AG04449 (cell line): ENCODE measurements at regions of chr7 and their contacts with region 1.

Region 1: GRCh38 chr7:108497082-108497725 is 28.7 kb downstream of the PNPLA8 start:
- DNase-seq: peak; percentile 1
- H3K4me3 ChIP-seq: no peak overlapping the region
- CTCF ChIP-seq: peak; percentile 68

Region 2: DNA sequence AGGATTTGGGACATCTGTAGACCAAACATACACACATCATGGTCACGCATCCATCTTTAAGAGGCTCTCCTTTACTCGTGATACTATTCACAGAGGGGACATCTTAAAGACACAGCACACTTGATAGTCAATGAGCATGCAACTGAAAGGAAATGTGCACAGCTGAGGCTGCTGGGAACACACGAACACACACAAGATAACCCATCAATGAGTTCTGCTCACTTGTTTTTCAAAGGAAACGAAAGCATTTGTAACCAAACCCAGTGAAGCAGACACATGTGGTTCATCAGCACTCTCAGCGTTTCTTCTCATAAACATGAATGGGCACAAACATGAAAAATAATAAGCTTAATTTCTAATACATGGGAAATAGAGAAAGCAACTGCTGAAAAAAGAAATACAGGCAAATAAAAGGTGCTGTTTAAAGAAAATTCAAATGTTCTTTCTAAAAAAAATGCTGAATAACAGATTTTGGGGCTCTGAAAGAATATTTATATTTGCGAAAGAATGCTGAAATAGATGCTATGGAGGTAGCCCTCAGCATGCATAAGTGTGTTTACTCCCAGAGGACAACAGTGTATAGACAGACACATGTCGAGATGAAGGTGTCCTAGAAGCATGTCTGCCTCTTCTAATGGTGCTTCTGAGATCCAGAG is 307.3 kb before region 1 on chr7:
- CTCF ChIA-PET with region 1: interaction called, 65 read pairs
- POLR2A ChIA-PET with region 1: no interaction called
- DNase-seq: no peak
- H3K4me3 ChIP-seq: no peak overlapping the region
- CTCF ChIP-seq: no peak

Region 3: DNA sequence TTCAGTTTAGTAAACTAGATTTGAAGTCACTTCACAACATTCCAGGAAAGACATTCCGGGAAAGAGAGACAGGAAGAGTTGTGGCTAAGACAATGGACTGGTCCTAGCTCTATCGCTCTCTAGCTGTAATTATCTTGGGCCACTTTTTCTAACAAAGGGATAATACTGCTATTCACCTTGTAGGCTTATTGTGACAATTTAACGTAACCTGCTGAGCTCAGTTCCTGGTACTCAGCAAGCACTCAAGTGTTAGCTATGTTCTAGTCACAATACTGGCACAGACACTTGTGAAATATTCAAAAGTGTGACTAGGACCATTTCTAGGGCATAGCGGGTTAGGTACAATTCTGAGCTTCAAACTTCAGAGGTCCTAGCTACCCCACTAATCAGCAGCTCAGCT is 29.0 kb before region 1 on chr7:
- CTCF ChIA-PET with region 1: interaction called, 11 read pairs
- POLR2A ChIA-PET with region 1: no interaction called
- DNase-seq: no peak
- H3K4me3 ChIP-seq: no peak overlapping the region
- CTCF ChIP-seq: no peak

Region 4: DNA sequence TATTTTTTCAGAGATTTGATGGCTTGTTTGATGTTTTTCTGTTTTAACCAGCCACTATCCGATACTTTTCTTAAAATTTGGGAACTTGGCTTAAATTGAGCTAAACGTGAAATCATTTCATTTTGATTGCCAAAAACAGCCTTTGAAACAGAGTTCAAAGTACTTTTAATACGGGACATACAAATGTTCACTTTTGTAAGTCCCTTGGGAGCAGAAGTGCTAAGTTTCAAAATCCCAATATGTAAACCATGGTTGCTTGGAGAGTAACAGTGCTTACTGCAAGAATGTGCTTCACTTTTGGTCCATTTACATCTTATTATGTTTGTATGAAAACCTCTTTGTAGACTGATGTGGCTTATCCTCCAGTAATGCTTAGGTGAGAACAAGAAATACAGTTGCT is 17.8 kb after region 1 on chr7:
- CTCF ChIA-PET with region 1: interaction called, 24 read pairs
- POLR2A ChIA-PET with region 1: no interaction called
- DNase-seq: no peak
- H3K4me3 ChIP-seq: no peak overlapping the region
- CTCF ChIP-seq: no peak

Region 5: DNA sequence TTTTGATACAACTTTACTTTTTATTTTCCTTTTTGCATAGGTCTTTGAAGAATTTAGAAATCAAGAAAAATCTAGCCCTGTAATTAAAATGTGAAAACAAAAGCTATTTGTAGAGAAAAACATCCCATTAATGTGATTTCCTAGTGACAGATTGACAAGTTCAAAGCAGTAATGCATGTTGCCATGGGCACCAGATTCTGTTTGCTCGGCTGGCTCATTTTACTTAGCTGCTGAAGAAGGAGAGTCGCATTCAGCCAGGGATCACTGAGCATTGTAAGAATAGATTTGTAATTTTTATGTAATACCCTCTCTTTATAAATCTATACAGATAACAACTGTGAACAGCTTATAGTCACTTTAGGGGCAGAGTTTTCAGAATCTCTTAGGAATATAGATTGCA is 100.9 kb after region 1 on chr7:
- CTCF ChIA-PET with region 1: no interaction called
- POLR2A ChIA-PET with region 1: no interaction called
- DNase-seq: no peak
- H3K4me3 ChIP-seq: no peak overlapping the region
- CTCF ChIP-seq: no peak

Region 6: DNA sequence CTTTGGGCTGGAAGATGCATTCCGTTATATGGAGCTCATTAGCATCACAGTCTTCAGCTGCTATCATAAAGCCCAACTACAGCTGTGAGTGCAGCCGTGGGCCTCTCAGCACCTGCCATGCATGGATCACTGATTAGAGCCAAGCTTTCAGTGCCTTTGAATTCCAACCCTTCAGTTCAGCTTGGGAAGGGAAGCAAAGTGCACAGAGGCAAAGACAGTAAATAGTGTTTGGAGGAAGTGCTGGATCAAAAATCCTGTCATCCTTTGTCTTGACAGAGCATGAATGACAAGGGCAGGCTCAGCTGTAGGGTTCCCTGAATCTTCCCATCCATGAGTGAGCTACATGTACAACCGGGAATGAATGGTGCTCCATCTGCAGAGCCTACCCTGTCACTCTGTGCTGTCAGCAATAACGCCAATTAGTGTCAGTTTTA is 226.2 kb after region 1 on chr7:
- CTCF ChIA-PET with region 1: no interaction called
- POLR2A ChIA-PET with region 1: no interaction called
- DNase-seq: no peak
- H3K4me3 ChIP-seq: no peak overlapping the region
- CTCF ChIP-seq: no peak